Activated B cell treated with CpG ODN at 0.5 μM for 24 hours (primary cell): ENCODE measurements at regions of chr19 and their contacts with region 1.

Region 1: DNA sequence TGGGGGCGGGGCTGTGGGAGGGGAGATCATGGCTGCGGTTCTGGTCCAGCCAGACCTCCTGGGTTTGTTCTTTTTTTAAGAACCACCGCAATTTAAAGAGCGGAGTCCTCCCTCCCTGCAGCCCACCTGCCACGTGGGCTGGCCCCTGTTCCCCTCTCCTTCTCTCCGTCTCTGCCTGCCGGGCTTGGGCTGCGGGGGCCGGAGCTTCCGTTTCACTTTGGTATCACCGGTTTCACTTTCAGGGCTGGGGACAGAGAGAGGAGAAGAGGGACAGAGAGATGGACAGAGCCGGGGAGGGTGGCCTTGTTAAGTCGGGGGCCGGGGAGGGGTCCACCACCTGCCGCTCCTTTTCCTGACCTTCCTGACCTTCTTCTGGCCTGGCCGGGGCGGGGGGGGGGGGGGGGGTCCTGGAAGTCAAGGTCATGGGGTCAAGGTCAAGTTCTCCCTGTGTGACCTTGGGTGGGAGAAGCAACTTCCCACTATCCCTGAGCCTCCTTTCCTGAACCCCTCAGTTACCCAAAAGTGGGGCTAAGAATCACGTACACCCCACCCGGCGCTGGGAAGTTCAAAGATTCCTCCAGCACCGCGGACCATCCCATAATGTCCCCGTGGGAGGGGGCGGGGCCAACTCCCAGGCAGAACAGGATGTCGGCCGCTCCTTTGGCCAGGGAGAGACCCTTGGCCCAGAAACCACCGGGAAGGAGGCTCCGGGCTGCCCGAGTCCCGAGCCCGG is 11.3 kb upstream of the ZBTB7A start:
- DNase-seq: peak; percentile 52
- ATAC-seq: peak; percentile 88
- H3K4me3 Mint-ChIP-seq: peak overlapping the region; percentile 88
- H3K27ac Mint-ChIP-seq: peak overlapping the region; percentile 90
- H3K4me1 Mint-ChIP-seq: peaks cover 19% of the 10 kb centered on the region
- H3K27me3 Mint-ChIP-seq: no peaks in the 10 kb centered on the region
- CTCF ChIP-seq: no peak

Region 2: DNA sequence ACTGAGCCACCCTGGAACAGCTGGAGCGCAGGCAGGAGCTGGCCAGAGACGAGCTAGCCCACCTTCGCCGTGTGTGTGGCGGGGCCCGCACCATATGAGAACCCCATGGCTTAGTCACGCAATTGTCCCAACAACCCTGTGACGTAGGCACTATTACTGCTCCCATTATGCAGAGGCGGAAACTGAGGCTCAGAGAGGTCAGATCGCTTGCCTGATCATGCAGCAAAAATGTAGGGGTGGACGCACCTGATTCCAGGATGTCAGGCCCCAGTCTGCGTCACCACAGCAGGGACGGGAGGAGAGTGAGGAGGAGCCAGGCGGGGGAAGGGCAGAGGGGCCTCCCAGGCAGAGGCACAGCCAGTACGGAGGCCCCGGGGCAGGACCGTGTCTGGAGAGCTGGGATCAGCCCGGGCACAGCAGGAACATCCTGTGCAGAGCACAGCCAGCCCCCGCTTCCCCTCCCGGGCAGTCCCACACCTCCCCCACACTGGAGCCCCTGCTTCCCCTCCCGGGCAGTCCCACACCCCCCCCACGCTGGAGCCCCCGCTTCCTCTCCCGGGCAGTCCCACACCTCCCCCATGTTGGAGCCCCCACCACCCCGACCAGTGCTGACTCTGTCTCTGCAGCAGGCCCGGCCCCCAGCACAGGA is 394.5 kb before region 1 on chr19:
- CTCF ChIA-PET with region 1: no interaction called
- POLR2A ChIA-PET with region 1: no interaction called
- intact Hi-C with region 1: no loop called
- DNase-seq: no peak
- ATAC-seq: peak; percentile 9
- H3K4me3 Mint-ChIP-seq: peak overlapping the region; percentile 77
- H3K27ac Mint-ChIP-seq: peak overlapping the region; percentile 70
- H3K4me1 Mint-ChIP-seq: peaks cover 37% of the 10 kb centered on the region
- H3K27me3 Mint-ChIP-seq: no peaks in the 10 kb centered on the region
- CTCF ChIP-seq: no peak

Region 3: DNA sequence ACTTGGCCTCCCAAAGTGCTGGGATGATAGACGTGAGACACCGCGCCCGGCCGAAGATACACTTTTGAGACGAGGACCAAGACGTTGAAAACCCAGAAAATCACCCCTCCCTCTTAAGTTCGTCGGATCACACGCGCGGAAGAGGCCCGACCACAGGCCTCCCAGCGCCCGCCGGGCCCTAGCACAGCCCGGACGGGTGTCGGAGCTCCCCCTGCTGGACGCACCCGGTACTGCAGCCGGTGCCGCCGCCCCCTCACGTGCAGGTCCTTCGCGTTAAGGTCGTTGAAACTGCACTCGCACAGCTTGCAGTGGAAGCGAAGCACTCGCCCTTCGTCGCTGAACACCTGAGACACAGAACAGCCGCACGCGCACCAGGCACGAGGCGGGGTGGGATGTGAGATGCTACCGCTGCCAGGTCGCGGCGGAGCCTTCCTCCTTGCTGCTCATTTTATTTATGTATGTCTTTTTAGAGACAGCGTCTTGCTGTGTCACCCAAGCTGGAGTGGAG is 256.1 kb before region 1 on chr19:
- CTCF ChIA-PET with region 1: no interaction called
- POLR2A ChIA-PET with region 1: no interaction called
- intact Hi-C with region 1: no loop called
- DNase-seq: peak; percentile 83
- ATAC-seq: peak; percentile 93
- H3K4me3 Mint-ChIP-seq: no peak overlapping the region
- H3K27ac Mint-ChIP-seq: peak overlapping the region; percentile 16
- H3K4me1 Mint-ChIP-seq: peaks cover 15% of the 10 kb centered on the region
- H3K27me3 Mint-ChIP-seq: no peaks in the 10 kb centered on the region
- CTCF ChIP-seq: peak; percentile 66

Region 4: DNA sequence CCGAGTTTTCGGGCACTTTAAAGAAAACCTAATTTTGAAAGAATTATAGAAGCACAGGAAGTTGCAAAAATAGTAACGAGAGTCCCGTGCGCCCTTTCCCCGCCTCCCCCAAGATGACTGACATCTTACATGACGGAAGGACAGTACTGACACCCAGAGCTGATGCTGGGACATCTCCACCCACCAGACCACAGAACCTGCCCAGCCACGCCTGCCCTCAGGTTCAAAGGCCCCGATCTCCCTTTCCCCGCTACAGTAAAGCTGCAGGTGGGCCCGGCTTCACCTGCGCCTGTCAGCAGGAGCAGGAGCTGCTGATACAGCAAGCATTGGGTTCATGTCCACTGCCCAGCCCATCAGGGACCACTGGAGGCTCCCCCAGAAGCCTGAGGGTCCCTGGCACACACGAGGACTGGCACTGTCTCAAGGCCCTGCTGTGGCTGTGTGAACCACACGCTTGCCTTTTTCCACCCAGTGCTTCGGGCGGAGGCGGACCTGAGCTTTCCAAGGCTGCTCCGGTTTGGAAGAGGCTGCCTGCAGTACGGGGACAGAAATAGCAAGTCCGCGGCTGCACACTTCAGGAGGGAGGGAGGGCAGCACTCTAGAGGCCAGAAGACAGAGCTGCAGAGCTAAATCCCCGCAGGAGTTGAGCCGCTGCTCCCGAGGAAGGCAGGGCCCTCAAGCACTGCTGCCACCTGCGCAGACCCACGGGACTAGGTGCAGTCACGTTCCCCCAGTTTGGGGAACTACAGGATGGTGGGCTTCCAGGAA is 37.2 kb after region 1 on chr19:
- CTCF ChIA-PET with region 1: no interaction called
- POLR2A ChIA-PET with region 1: interaction called, 11 read pairs
- intact Hi-C with region 1: no loop called
- DNase-seq: peak; percentile 36
- ATAC-seq: peak; percentile 91
- H3K4me3 Mint-ChIP-seq: peak overlapping the region; percentile 72
- H3K27ac Mint-ChIP-seq: peak overlapping the region; percentile 86
- H3K4me1 Mint-ChIP-seq: peaks cover 54% of the 10 kb centered on the region
- H3K27me3 Mint-ChIP-seq: no peaks in the 10 kb centered on the region
- CTCF ChIP-seq: no peak